ENCODE measurements at regions of chr17 and their contacts with region 1.

Region 1: DNA sequence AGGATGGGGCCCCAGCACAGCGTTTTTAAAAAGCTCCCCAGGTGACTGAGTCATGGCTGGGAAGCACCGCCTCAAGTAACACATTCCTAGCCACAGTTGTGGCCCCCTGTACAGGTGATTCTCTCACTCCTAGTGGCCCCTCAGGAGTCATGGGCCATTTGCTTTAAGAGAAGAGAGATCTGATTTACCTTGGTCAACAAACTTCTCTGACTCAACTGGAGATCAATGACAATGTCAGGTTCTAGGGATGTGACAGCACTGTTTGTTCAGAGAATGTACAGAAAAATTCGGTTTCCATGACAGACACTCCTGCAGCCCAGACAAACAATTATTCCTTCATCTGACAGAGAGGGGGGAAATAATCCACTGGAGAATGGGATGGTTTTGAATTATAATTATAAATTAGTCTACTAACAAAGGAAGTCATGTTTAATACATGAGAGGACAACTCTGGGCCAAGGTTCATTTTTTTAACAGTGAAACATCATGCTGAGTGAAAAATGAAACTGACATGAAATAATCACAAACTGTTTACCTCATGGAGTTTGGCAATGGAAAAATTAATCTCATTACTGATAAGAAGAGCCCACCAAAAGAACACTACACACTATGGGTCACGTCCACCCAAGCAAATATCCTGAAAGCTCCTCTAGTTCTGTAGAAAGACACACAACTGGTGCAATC is 9.7 kb downstream of the ERN1 start:
- DNase-seq: peak; percentile 29
- H3K4me3 ChIP-seq: no peak overlapping the region
- H3K27ac ChIP-seq: no peak overlapping the region
- H3K4me1 ChIP-seq: peaks cover 32% of the 10 kb centered on the region
- H3K27me3 ChIP-seq: no peaks in the 10 kb centered on the region
- CTCF ChIP-seq: no peak

Region 2: DNA sequence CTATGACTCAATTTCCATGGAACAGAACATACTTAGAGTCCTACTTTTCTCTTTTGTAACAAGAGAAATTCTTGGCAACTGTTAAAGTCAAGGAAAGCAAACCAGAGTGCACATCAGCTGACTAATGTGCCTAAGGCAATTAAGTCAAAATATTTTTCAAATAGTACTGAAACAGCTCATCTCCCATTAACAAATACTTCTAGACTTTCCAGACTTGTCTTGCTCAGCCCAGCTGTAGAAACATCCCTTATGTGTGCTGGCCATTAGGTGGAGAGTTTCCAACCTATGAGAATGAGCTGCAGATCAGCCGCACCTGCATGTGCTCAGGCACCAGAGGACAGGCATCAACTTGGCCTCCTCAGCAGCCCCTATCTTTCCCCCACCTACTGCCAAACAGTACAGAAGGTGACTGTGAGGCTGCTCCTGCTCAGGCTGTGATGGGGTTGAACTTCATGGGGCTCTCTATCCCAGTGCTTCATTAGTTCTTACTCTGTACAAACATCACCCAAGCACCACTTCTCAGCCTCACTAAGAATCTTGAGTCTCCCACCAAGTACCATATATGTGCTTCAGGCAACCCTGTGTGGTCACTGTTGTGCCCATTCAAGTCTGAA is 110.6 kb after region 1 on chr17:
- CTCF ChIA-PET with region 1: interaction called, 12 read pairs
- POLR2A ChIA-PET with region 1: no interaction called
- intact Hi-C with region 1: no loop called
- DNase-seq: no peak
- H3K4me3 ChIP-seq: no peak overlapping the region
- H3K27ac ChIP-seq: no peak overlapping the region
- H3K4me1 ChIP-seq: no peaks in the 10 kb centered on the region
- H3K27me3 ChIP-seq: no peaks in the 10 kb centered on the region
- CTCF ChIP-seq: no peak

Measured in A673 (cell line).